ENCODE measurements at regions of chr18 and their contacts with region 1.

Region 1: GRCh38 chr18:24482821-24483220 is 22.4 kb downstream of the HRH4 start:
- DNase-seq: no peak
- H3K4me3 ChIP-seq: no peak overlapping the region
- CTCF ChIP-seq: no peak
- POLR2A ChIP-seq: no peak

Region 2: GRCh38 chr18:24560511-24560981 is 77.7 kb after region 1 on chr18:
- intact Hi-C with region 1: no loop called
- DNase-seq: no peak
- H3K4me3 ChIP-seq: no peak overlapping the region
- CTCF ChIP-seq: no peak
- POLR2A ChIP-seq: no peak

Region 3: GRCh38 chr18:26127786-26128185 is 1645.0 kb after region 1 on chr18:
- intact Hi-C with region 1: loop called (anchors 5 kb)
- DNase-seq: no peak
- H3K4me3 ChIP-seq: no peak overlapping the region
- CTCF ChIP-seq: no peak
- POLR2A ChIP-seq: no peak

Measured in lower leg skin (tissue), 4 donors.